Gastrocnemius medialis (tissue), 4 donors: ENCODE measurements at regions of chr19 and their contacts with region 1.

Region 1: DNA sequence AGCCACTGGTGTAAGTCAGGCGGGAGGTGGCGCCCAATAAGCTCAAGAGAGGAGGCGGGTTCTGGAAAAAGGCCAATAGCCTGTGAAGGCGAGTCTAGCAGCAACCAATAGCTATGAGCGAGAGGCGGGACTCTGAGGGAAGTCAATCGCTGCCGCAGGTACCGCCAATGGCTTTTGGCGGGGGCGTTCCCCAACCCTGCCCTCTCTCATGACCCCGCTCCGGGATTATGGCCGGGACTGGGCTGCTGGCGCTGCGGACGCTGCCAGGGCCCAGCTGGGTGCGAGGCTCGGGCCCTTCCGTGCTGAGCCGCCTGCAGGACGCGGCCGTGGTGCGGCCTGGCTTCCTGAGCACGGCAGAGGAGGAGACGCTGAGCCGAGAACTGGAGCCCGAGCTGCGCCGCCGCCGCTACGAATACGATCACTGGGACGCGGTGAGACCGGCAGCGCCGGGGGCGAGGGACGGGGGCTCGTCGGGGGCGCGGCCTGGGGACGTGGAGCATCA is at the start of gene ALKBH7:
- DNase-seq: peak; percentile 100
- ATAC-seq: peak; percentile 92 to 93
- H3K4me3 ChIP-seq: peak within 1 kb of the TSS; percentile 86 to 99 (median 94)
- H3K27ac ChIP-seq: peak within 1 kb of the TSS; percentile 98 to 100 (median 100)
- H3K4me1 ChIP-seq: peaks cover 0 to 10% of the 10 kb centered on the region in 2 donors
- H3K27me3 ChIP-seq: no peaks in the 10 kb centered on the region
- CTCF ChIP-seq: peak in 1 of 5 experiments; percentile 5
- POLR2A ChIP-seq: peak; percentile 55 to 65
- total RNA-seq, gene ALKBH7: 42.2 to 112 (median 90.4) TPM

Region 2: GRCh38 chr19:5904352-5905113 is 468.1 kb before region 1 on chr19 and contains the start of gene VMAC:
- in situ Hi-C with region 1: no loop called
- intact Hi-C with region 1: loop called (anchors 5 kb)
- DNase-seq: peak; percentile 100
- ATAC-seq: peak; percentile 81 to 88
- H3K4me3 ChIP-seq: peak within 1 kb of the TSS; percentile 68 to 100 (median 97)
- H3K27ac ChIP-seq: peak within 1 kb of the TSS; percentile 93 to 98 (median 94)
- H3K4me1 ChIP-seq: peaks cover 10 to 20% of the 10 kb centered on the region in 2 donors
- H3K27me3 ChIP-seq: no peaks in the 10 kb centered on the region
- CTCF ChIP-seq: no peak
- POLR2A ChIP-seq: peak in 1 of 2 donors; percentile 5
- total RNA-seq, gene VMAC: 0.46 to 3.0 (median 2.1) TPM

Region 3: GRCh38 chr19:6199240-6199983 is 173.2 kb before region 1 on chr19:
- in situ Hi-C with region 1: no loop called
- intact Hi-C with region 1: loop called (anchors 5 kb)
- DNase-seq: peak; percentile 96 to 99
- ATAC-seq: peak; percentile 94 to 96
- H3K4me3 ChIP-seq: peak overlapping the region; percentile 62 to 85 (median 72)
- H3K27ac ChIP-seq: peak overlapping the region; percentile 69 to 87 (median 80)
- H3K4me1 ChIP-seq: peaks cover 11 to 13% of the 10 kb centered on the region in 2 donors
- H3K27me3 ChIP-seq: no peaks in the 10 kb centered on the region
- CTCF ChIP-seq: peak; percentile 46 to 75 (median 67)
- POLR2A ChIP-seq: no peak

Region 4: GRCh38 chr19:6362027-6362350 is 10.7 kb before region 1 on chr19:
- in situ Hi-C with region 1: no loop called
- intact Hi-C with region 1: loop called (anchors 1 kb)
- DNase-seq: no peak
- ATAC-seq: no peak
- H3K4me3 ChIP-seq: peak overlapping the region; percentile 78 to 87 (median 86)
- H3K27ac ChIP-seq: peak overlapping the region; percentile 84 to 88 (median 86)
- H3K4me1 ChIP-seq: peaks cover 9 to 11% of the 10 kb centered on the region in 2 donors
- H3K27me3 ChIP-seq: no peaks in the 10 kb centered on the region
- CTCF ChIP-seq: no peak
- POLR2A ChIP-seq: no peak

Region 5: DNA sequence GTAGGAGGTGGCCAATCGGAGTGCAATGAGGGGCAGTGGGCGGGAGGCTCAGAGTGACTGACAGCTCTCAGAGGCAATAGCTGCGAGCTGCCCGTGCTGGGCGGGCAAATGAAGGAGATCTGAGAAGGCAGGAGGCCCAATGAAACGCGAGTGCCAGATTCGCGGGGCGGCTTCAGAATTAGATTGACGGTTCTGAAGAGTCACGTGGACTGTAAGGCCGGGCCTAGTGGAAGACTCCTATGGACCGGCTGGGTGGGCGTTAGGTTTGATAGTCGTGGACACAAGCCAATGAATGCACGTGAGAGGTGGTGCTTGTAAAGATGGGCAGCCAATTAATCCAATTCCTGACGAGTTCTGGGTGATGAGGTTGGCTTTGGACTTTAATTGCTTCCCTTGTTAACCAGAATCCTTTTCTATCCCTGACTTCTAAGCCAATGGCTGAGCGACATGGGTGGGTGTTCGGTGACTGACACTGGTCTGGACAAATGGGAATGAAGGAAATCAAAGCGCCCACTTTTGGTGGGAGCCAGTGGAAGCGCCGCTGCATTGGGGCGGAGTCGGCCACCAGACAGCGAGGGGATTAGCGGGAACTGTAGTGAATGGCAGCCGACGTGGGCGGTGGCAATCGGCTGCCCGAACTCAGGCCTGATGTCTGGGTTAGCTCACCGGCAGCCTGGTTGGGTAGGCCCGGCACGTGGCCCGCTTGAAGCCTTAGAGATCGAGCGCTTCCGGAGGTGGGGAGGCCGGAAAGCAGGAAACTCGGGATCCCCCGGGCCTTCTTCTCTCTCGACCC is 52.5 kb after region 1 on chr19:
- in situ Hi-C with region 1: no loop called
- intact Hi-C with region 1: loop called (anchors 1 kb)
- DNase-seq: peak; percentile 100
- ATAC-seq: peak; percentile 92 to 95
- H3K4me3 ChIP-seq: peak overlapping the region; percentile 36 to 81 (median 44)
- H3K27ac ChIP-seq: peak overlapping the region; percentile 84 to 91 (median 86)
- H3K4me1 ChIP-seq: peaks cover 20 to 24% of the 10 kb centered on the region in 2 donors
- H3K27me3 ChIP-seq: no peaks in the 10 kb centered on the region
- CTCF ChIP-seq: peak in 1 of 5 experiments; percentile 13
- POLR2A ChIP-seq: no peak

Region 6: GRCh38 chr19:6457958-6458694 is 85.5 kb after region 1 on chr19:
- in situ Hi-C with region 1: no loop called
- intact Hi-C with region 1: no loop called
- DNase-seq: no peak
- ATAC-seq: no peak
- H3K4me3 ChIP-seq: peak overlapping the region in 2 of 4 donors; percentile 64 to 66
- H3K27ac ChIP-seq: peak overlapping the region in 3 of 4 donors; percentile 23 to 80 (median 78)
- H3K4me1 ChIP-seq: peaks cover 5 to 14% of the 10 kb centered on the region in 2 donors
- H3K27me3 ChIP-seq: peaks cover 0 to 2% (median under 1%) of the 10 kb centered on the region in 3 donors
- CTCF ChIP-seq: no peak
- POLR2A ChIP-seq: no peak